HAP-1 (cell line): ENCODE measurements at regions of chr2 and their contacts with region 1.

Region 1: DNA sequence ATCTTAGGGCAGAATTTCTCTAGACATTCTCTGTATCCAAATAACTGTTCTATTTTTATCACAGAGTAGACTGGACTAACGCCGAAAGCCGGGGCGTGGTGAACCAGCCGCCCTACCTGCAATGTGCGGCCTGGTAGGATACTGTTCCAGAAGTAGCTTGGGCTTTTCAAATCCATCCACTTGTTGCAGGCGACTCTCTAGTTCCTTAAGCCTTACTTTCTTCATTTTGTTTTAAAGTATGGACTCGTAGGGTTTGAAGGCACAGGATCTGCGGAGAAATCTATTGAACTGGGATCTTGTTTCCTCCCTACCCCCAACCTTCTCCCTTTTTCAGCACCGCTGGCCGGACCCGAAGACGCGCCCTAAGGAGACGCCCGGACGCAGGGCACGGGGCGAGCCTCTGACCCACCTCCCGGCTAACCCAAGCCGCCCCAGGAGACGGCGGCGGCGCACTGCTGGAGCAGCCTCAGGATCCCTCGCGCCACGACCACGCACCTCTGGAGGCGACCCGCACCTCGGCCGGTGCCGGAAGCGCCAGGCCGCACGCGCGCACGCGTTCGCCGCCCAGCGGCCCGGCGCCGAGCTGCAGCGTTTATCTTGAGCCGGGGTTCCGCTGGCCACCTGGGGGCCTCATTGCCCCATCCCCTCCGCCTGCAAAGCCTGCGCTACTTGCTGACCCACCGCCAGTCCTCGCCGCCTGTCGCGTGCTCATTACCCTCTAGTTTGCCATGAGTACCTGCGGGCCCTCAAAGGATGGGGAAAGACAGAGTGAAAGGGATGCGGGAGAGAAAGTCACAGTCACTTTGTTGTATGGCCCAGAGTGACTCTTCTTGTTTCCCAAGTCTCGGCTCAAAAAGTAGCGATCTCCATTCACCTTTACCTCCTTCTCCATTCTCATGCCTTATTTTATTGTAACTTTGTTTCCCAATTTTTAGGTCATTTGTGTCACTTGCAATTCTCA is at the start of gene METTL5:
- DNase-seq: peak; percentile 74 to 89
- H3K4me3 ChIP-seq: peak within 1 kb of the TSS; percentile 68
- H3K4me1 ChIP-seq: peaks cover 28% of the 10 kb centered on the region
- H3K27me3 ChIP-seq: no peaks in the 10 kb centered on the region

Region 2: DNA sequence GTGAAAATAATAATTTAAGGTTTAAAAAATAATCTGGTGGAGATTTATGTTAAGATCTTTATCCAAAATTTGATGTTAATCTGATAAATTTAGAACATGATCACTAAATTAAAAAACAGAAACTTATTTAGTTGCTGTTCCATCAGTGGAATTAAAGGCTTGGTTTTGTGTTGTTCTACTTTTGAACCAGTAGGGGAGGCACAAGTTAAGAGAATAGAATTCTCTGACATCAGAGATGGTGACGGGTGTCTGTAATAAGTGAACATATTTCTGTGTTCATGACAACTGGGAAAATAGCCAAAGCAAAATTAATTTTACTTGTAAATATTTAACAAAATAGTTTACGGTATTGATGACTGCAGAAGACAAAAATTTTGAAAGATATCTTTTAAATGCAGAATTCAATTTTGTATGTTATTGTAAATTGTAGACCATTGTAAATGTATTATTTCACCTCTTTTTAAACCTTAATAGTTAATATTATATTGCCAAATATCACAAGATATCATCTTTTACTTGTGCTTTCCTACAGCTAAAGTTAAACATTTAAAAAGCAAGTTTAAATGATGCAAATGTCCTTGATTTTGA is 108.6 kb after region 1 on chr2:
- in situ Hi-C with region 1: loop called (anchors 10 kb)
- DNase-seq: peak in 1 of 2 experiments; percentile 65
- H3K4me3 ChIP-seq: no peak overlapping the region
- H3K4me1 ChIP-seq: no peaks in the 10 kb centered on the region
- H3K27me3 ChIP-seq: no peaks in the 10 kb centered on the region